Activated T-helper 2 cell treated with anti-CD3 and anti-CD28 coated beads, Interferon-gamma antibody, Interleukin-2, Interleukin-4, amounts not matched to agents 10 μg/mL and 5 μg/mL and 100 μg/mL, durations not matched to agents 14 hours and 24 hours and 36 hours (primary cell): ENCODE measurements at regions of chr19 and their contacts with region 1.

Region 1: GRCh38 chr19:57850553-57851017 is 926 bp downstream of the ZNF587 start:
- DNase-seq: no peak
- H3K4me3 Mint-ChIP-seq: peak overlapping the region; percentile 92
- H3K27ac Mint-ChIP-seq: peak overlapping the region; percentile 91
- H3K4me1 Mint-ChIP-seq: peaks cover 19% of the 10 kb centered on the region
- H3K27me3 Mint-ChIP-seq: no peaks in the 10 kb centered on the region

Region 2: DNA sequence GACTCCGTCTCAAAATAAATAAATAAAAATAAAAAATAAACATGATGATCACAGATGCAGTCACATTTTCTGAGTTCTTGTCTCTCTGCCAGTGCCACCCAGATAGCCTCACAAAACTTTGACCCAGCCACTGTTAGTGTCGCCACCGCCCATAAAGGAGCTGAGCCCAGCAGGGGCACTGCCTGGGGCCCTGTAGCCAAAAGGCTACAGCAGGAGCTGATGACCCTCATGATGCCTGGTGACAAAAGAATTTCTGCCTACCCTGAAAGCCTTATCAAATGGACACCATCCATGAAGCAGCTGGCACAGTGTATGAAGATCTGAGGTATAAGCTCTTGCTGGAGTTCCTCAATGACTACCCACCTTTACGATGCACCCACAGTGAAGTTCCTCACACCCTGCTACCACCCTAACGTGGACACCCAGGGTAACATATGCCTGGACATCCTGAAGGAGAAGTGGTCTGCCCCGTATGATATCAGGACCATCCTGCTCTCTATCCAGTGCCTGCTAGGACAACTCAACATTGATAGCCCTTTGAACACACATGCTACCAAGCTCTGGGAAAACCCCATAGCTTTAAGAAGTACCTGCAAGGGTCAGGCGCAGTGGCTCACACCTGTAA is 17.4 kb after region 1 on chr19:
- intact Hi-C with region 1: no loop called
- DNase-seq: no peak
- H3K4me3 Mint-ChIP-seq: no peak overlapping the region
- H3K27ac Mint-ChIP-seq: no peak overlapping the region
- H3K4me1 Mint-ChIP-seq: no peaks in the 10 kb centered on the region
- H3K27me3 Mint-ChIP-seq: no peaks in the 10 kb centered on the region

Region 3: DNA sequence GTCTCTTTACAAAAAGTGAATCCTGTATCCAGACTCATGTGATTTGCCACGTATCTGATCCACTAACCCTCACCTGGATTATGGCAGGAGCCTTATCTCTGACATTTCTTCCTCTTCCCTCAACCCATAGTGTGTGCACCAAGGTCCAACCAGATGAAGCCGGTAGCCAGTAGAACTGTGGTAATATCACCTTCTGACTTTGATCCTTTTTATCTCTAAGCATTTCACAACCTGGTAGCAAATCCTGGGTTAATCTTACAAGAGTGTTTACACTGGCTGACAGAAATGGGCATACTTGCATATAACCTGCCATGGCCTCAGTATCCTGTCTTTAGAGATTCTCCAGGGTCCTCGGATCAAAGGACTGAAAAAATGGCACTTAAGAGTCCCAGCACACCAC is 63.9 kb after region 1 on chr19:
- intact Hi-C with region 1: loop called (anchors 10 kb)
- DNase-seq: no peak
- H3K4me3 Mint-ChIP-seq: peak overlapping the region; percentile 94
- H3K27ac Mint-ChIP-seq: no peak overlapping the region
- H3K4me1 Mint-ChIP-seq: peaks cover 21% of the 10 kb centered on the region
- H3K27me3 Mint-ChIP-seq: no peaks in the 10 kb centered on the region

Region 4: DNA sequence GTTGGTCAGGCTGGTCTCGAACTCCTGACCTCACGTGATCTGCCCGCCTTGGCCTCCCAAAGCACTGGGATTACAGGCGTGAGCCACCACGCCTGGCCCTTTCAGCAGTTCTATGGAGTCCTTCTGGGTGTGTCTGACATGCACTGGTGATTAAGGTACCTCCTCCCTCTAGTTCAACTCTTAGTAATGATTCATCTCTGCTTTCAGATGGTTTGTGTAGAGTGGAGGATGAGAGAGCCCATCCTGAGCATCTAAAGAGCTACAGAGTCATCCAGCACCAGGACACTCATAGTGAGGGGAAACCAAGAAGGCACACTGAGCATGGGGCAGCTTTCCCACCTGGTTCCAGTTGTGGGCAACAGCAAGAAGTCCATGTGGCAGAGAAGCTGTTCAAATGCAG is 566.0 kb after region 1 on chr19:
- intact Hi-C with region 1: no loop called
- DNase-seq: no peak
- H3K4me3 Mint-ChIP-seq: no peak overlapping the region
- H3K27ac Mint-ChIP-seq: no peak overlapping the region
- H3K4me1 Mint-ChIP-seq: no peaks in the 10 kb centered on the region
- H3K27me3 Mint-ChIP-seq: no peaks in the 10 kb centered on the region